Activated T-helper 1 cell treated with anti-CD3 and anti-CD28 coated beads, Interleukin-12 subunit alpha, Interleukin-12 subunit beta, Interleukin-2, Interleukin-4 antibody, amounts not matched to agents 30 ng/mL and 10 ng/mL and 1 ng/mL, durations not matched to agents 14 hours and 24 hours and 36 hours (primary cell): ENCODE measurements at regions of chr4 and their contacts with region 1.

Region 1: GRCh38 chr4:2843263-2843940 is at the start of gene ADD1:
- DNase-seq: peak; percentile 97
- H3K4me3 Mint-ChIP-seq: peak within 1 kb of the TSS; percentile 95
- H3K27ac Mint-ChIP-seq: peak within 1 kb of the TSS; percentile 92
- H3K4me1 Mint-ChIP-seq: peaks cover 49% of the 10 kb centered on the region
- H3K27me3 Mint-ChIP-seq: no peaks in the 10 kb centered on the region
- total RNA-seq, gene ADD1: 200 and 203 TPM in 2 replicates

Region 2: DNA sequence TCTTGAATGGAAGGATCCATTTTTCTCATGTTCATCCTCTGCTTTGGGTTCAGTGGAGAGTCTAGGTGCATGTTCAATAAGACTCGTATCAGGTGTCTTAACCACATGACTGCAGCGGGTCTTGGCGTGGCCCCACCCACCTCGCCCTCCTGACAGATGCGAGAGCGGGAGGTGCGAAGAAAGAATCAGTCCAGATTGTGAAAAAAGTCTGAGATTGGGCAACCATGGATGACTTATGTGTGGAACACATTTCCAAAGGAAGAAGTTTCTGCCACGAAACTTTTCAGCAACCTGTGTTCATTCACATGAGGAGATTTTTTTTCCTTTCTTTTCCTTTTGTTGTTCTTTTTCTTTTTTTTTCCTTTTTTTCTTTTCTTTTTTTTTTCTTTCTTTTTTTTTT is 905.4 kb before region 1 on chr4:
- intact Hi-C with region 1: no loop called
- DNase-seq: no peak
- H3K4me3 Mint-ChIP-seq: no peak overlapping the region
- H3K27ac Mint-ChIP-seq: no peak overlapping the region
- H3K4me1 Mint-ChIP-seq: no peaks in the 10 kb centered on the region
- H3K27me3 Mint-ChIP-seq: no peaks in the 10 kb centered on the region

Region 3: GRCh38 chr4:2468445-2469192 is 374.8 kb before region 1 on chr4 and contains the start of gene RNF4:
- intact Hi-C with region 1: no loop called
- DNase-seq: peak; percentile 94
- H3K4me3 Mint-ChIP-seq: peak within 1 kb of the TSS; percentile 95
- H3K27ac Mint-ChIP-seq: peak within 1 kb of the TSS; percentile 96
- H3K4me1 Mint-ChIP-seq: peaks cover 29% of the 10 kb centered on the region
- H3K27me3 Mint-ChIP-seq: peaks cover 1% of the 10 kb centered on the region
- total RNA-seq, gene RNF4: 93.7 and 112 TPM in 2 replicates

Region 4: GRCh38 chr4:2800691-2801596 is 42.5 kb before region 1 on chr4:
- intact Hi-C with region 1: loop called (anchors 2 kb)
- DNase-seq: no peak
- H3K4me3 Mint-ChIP-seq: peak overlapping the region; percentile 78
- H3K27ac Mint-ChIP-seq: peak overlapping the region; percentile 48
- H3K4me1 Mint-ChIP-seq: peaks cover 36% of the 10 kb centered on the region
- H3K27me3 Mint-ChIP-seq: no peaks in the 10 kb centered on the region

Region 5: DNA sequence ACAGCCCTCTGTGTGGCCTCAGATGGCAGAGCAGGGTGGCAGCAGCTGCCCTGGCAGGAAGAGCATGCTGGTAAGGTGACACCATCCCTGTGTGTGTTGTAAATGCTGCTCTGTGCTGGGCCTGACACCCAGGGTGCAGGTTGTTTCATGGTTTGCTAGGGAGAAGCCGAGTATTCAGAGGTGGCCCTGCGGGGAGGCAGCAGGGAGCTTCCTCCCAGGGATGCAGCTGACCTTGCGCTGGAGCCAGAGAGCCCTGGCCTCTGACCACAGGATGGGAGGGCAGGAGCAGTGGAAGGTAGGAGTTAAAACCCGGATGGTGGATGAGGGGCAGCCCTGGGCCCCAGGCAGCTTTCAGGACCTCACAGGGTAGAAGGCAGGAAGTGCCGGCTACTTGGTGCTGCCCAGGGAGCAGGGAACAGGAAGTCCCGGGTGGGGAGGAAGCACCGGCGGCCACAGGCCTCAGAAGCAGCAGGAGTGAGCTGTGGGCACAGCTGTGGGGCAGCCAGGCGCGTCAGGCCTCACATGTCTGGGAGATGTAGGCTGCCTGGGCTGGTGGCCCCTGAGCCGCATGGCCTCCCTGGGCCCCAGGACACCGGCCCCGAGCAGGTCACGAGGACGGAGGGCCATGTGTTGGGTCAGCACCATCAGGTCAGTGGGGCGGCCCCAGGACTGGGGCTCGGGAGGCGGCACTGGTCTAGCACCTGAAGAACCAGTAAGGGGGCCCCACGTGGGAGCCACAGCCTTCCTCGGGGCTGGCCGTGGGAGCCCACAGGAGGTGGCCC is 31.4 kb before region 1 on chr4:
- intact Hi-C with region 1: loop called (anchors 1 kb)
- DNase-seq: peak; percentile 54
- H3K4me3 Mint-ChIP-seq: peak overlapping the region; percentile 94
- H3K27ac Mint-ChIP-seq: peak overlapping the region; percentile 96
- H3K4me1 Mint-ChIP-seq: peaks cover 60% of the 10 kb centered on the region
- H3K27me3 Mint-ChIP-seq: no peaks in the 10 kb centered on the region

Region 6: GRCh38 chr4:2891294-2891693 is 47.9 kb after region 1 on chr4:
- intact Hi-C with region 1: no loop called
- DNase-seq: no peak
- H3K4me3 Mint-ChIP-seq: no peak overlapping the region
- H3K27ac Mint-ChIP-seq: no peak overlapping the region
- H3K4me1 Mint-ChIP-seq: peaks cover 8% of the 10 kb centered on the region
- H3K27me3 Mint-ChIP-seq: no peaks in the 10 kb centered on the region

Region 7: GRCh38 chr4:2934813-2935761 is 91.7 kb after region 1 on chr4:
- intact Hi-C with region 1: loop called (anchors 2 kb)
- DNase-seq: peak; percentile 95
- H3K4me3 Mint-ChIP-seq: peak overlapping the region; percentile 94
- H3K27ac Mint-ChIP-seq: peak overlapping the region; percentile 87
- H3K4me1 Mint-ChIP-seq: peaks cover 49% of the 10 kb centered on the region
- H3K27me3 Mint-ChIP-seq: no peaks in the 10 kb centered on the region

Region 8: GRCh38 chr4:2954358-2955185 is 111.2 kb after region 1 on chr4:
- intact Hi-C with region 1: loop called (anchors 2 kb)
- DNase-seq: peak; percentile 64
- H3K4me3 Mint-ChIP-seq: peak overlapping the region; percentile 80
- H3K27ac Mint-ChIP-seq: peak overlapping the region; percentile 98
- H3K4me1 Mint-ChIP-seq: peaks cover 72% of the 10 kb centered on the region
- H3K27me3 Mint-ChIP-seq: no peaks in the 10 kb centered on the region